Common myeloid progenitor, CD34-positive (primary cell): ENCODE measurements at regions of chr15 and their contacts with region 1.

Region 1: DNA sequence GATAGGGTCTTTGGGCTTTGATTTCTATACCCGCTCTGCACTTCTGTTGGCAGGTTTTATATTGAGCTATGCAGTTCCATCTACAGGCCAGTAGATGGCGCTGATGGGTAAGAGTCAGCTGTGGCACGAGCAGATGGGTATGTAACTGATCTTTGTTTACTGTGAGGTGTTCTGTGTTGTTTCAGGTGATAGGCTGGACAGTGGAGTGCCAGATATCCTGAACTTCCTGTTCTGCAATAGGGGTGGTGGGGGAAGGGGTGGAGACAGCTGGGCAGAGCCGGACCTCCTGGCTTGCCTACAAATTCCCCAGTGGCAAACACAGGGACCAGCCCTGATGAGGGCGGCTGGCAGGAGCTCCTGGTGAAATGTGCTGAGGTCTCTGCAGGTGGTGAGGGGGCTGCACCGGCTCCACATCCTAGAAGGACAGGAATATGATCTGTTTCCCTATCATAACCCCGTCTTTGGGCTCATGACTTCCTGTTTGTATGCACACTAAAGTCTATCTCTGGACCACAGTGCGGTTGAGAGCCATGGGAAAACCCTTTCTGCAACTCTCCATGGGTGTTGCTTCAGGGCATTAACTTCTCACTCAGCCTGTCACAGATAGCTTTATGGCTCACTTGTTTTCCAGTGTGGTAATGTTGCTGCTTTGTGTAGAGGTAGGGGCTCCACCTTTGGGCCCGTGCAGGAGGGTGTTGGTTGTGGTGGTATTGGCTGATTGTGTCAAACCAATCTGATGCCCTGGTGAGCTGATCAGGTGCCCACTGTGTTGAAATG is 13.4 kb upstream of the FAM98B start:
- DNase-seq: peak; percentile 61 to 83 (median 78)
- H3K4me3 ChIP-seq: no peak overlapping the region
- H3K27ac ChIP-seq: no peak overlapping the region
- H3K4me1 ChIP-seq: peaks cover 0 to 8% (median 3%) of the 10 kb centered on the region in 4 experiments
- H3K27me3 ChIP-seq: no peaks in the 10 kb centered on the region

Region 2: GRCh38 chr15:38453971-38454695 is 13.6 kb after region 1 on chr15 and contains the start of gene FAM98B:
- CTCF ChIA-PET with region 1: interaction called, 22 read pairs
- POLR2A ChIA-PET with region 1: no interaction called
- DNase-seq: peak; percentile 88 to 89 (median 88)
- H3K4me3 ChIP-seq: peak within 1 kb of the TSS; percentile 57 to 97 (median 93)
- H3K27ac ChIP-seq: peak within 1 kb of the TSS; percentile 86 to 95
- H3K4me1 ChIP-seq: peaks cover 7 to 25% (median 15%) of the 10 kb centered on the region in 4 experiments
- H3K27me3 ChIP-seq: no peaks in the 10 kb centered on the region

Region 3: DNA sequence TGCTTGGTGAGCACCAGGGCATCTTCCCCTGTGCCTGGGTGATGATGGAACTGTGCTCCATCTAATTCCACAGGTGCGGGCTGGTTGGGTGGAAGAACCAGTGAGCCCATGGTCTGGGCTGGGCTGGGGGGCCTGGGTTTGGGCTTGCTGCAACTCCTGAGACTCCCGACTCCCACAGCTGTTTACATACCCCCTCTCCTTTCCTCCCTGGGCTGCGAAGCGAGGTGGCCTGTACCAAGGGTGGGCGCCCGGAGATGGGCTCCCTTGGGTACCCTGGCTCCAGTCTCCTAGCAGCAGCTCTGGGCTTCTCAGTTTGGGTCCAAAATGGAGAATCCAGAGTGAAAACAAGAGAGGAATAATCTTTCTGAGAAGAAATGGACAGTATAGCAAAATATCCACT is 18.9 kb after region 1 on chr15:
- CTCF ChIA-PET with region 1: interaction called, 22 read pairs
- POLR2A ChIA-PET with region 1: no interaction called
- DNase-seq: no peak
- H3K4me3 ChIP-seq: no peak overlapping the region
- H3K27ac ChIP-seq: no peak overlapping the region
- H3K4me1 ChIP-seq: peaks cover 7 to 21% (median 20%) of the 10 kb centered on the region in 4 experiments
- H3K27me3 ChIP-seq: no peaks in the 10 kb centered on the region

Region 4: GRCh38 chr15:38699633-38700230 is 259.2 kb after region 1 on chr15:
- CTCF ChIA-PET with region 1: interaction called, 14 read pairs
- POLR2A ChIA-PET with region 1: no interaction called
- DNase-seq: peak; percentile 74 to 85 (median 85)
- H3K4me3 ChIP-seq: no peak overlapping the region
- H3K27ac ChIP-seq: no peak overlapping the region
- H3K4me1 ChIP-seq: peaks cover 2 to 49% (median 47%) of the 10 kb centered on the region in 4 experiments
- H3K27me3 ChIP-seq: no peaks in the 10 kb centered on the region